ENCODE measurements at regions of chr13 and their contacts with region 1.

Region 1: GRCh38 chr13:98653463-98653985 is 76.6 kb upstream of the STK24 start:
- DNase-seq: peak; percentile 61 to 73 (median 64)
- H3K4me3 ChIP-seq: no peak overlapping the region
- H3K4me3 Mint-ChIP-seq: peak overlapping the region in 6 of 8 donors; percentile 42 to 84 (median 64)
- H3K27ac ChIP-seq: no peak overlapping the region
- H3K27ac Mint-ChIP-seq: peak overlapping the region in 3 of 7 donors; percentile 1 to 73 (median 68)
- H3K4me1 ChIP-seq: peaks cover 5% of the 10 kb centered on the region
- H3K4me1 Mint-ChIP-seq: peaks cover 0 to 7% (median 3%) of the 10 kb centered on the region in 4 donors
- H3K27me3 ChIP-seq: no peaks in the 10 kb centered on the region
- H3K27me3 Mint-ChIP-seq: peaks cover 0 to 3% of the 10 kb centered on the region in 2 donors

Region 2: DNA sequence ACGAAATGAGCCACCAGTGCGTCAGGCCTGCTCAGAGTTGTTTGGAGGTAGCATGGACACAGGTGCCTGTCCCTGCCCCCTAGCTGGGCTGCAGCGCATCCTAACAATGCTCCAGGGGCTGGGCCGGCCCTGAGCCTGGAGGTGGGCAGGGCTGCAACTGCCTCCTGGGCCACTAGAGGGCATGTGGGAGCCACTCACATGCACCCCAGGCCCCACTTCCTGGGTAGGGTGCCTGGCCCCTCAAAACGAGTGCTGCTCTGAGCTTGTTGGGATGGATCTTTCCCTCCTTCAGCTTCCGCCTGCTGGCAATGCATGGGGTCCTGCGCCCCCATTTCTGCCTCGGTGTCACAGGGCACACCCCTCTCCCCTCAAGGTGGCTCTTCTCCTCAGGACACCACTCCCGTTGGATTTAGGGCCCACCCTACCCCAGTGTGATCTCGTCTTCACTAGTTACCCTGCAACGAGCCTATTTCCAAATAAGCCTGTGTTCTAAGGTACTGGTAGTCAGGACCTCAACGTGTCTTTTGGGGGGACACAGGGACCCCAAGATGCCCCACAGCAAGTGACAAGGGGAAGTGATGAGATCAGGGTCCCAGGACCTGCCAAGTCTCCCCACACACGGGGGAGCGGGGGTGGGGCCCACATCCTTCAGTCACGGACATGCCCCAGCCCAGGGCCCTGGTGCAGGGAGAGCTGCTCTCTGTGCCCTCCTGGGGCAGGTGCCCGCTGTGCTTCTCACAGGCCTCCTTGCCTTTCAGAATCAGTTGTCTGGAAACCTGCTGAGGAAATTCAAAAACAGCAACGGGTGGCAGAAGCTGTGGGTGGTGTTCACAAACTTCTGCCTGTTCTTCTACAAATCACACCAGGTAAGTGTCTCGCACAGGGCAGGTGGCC is 207.9 kb before region 1 on chr13:
- CTCF ChIA-PET with region 1: interaction called, 345 read pairs
- POLR2A ChIA-PET with region 1: interaction called, 38 read pairs
- intact Hi-C with region 1: loop called (anchors 1 kb)
- DNase-seq: peak; percentile 73 to 79 (median 74)
- H3K4me3 ChIP-seq: no peak overlapping the region
- H3K4me3 Mint-ChIP-seq: peak overlapping the region in 7 of 8 donors; percentile 27 to 82 (median 57)
- H3K27ac ChIP-seq: peak overlapping the region; percentile 33
- H3K27ac Mint-ChIP-seq: peak overlapping the region; percentile 88 to 93 (median 90)
- H3K4me1 ChIP-seq: peaks cover 18% of the 10 kb centered on the region
- H3K4me1 Mint-ChIP-seq: peaks cover 7 to 37% (median 23%) of the 10 kb centered on the region in 4 donors
- H3K27me3 ChIP-seq: no peaks in the 10 kb centered on the region
- H3K27me3 Mint-ChIP-seq: no peaks in the 10 kb centered on the region

Region 3: GRCh38 chr13:98466634-98467236 is 186.8 kb before region 1 on chr13:
- CTCF ChIA-PET with region 1: interaction called, 48 read pairs
- POLR2A ChIA-PET with region 1: no interaction called
- intact Hi-C with region 1: no loop called
- DNase-seq: peak in 1 of 5 donors; percentile 24
- H3K4me3 ChIP-seq: no peak overlapping the region
- H3K4me3 Mint-ChIP-seq: no peak overlapping the region
- H3K27ac ChIP-seq: no peak overlapping the region
- H3K27ac Mint-ChIP-seq: peak overlapping the region in 6 of 7 donors; percentile 47 to 73 (median 58)
- H3K4me1 ChIP-seq: no peaks in the 10 kb centered on the region
- H3K4me1 Mint-ChIP-seq: peaks cover 16 to 35% (median 25%) of the 10 kb centered on the region in 4 donors
- H3K27me3 ChIP-seq: no peaks in the 10 kb centered on the region
- H3K27me3 Mint-ChIP-seq: no peaks in the 10 kb centered on the region

Region 4: DNA sequence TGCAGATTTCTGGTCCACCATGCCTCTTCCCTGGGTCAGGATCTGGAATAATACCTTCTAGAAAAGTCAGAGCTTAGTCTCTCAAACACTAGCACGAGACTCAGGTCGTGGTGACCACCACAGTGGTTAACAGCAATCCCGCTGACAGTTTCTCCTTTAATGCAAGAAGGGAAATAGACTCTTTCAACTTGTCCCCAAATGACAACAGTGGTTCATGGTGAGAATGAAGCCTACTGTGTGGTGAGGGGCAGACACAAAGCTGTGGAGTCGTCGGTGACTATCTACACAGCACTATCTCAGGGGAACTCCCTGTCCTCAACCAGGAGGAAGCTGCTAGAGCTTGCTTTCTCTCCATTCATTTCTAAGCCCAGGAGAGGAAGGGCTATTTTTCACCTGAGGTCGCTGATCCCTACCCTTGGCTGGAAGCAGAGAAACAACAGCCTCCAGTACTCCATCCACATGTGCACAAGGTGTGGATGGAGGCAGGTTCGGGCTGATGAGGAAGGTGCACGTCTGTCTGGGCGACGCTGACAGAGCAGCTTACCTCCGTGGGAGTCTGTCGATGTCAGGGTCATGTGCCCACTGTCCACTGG is 149.1 kb before region 1 on chr13:
- CTCF ChIA-PET with region 1: interaction called, 10 read pairs
- POLR2A ChIA-PET with region 1: no interaction called
- intact Hi-C with region 1: no loop called
- DNase-seq: peak in 2 of 5 donors; percentile 28 to 62
- H3K4me3 ChIP-seq: no peak overlapping the region
- H3K4me3 Mint-ChIP-seq: peak overlapping the region; percentile 19 to 78 (median 64)
- H3K27ac ChIP-seq: no peak overlapping the region
- H3K27ac Mint-ChIP-seq: peak overlapping the region; percentile 20 to 85 (median 78)
- H3K4me1 ChIP-seq: peaks cover 82% of the 10 kb centered on the region
- H3K4me1 Mint-ChIP-seq: peaks cover 71 to 100% (median 85%) of the 10 kb centered on the region in 4 donors
- H3K27me3 ChIP-seq: no peaks in the 10 kb centered on the region
- H3K27me3 Mint-ChIP-seq: no peaks in the 10 kb centered on the region

Region 5: GRCh38 chr13:98565726-98566565 is 87.6 kb before region 1 on chr13:
- CTCF ChIA-PET with region 1: interaction called, 17 read pairs
- POLR2A ChIA-PET with region 1: no interaction called
- intact Hi-C with region 1: no loop called
- DNase-seq: no peak
- H3K4me3 ChIP-seq: peak overlapping the region; percentile 4 to 39
- H3K4me3 Mint-ChIP-seq: peak overlapping the region; percentile 63 to 97 (median 86)
- H3K27ac ChIP-seq: peak overlapping the region; percentile 81
- H3K27ac Mint-ChIP-seq: peak overlapping the region; percentile 94 to 98 (median 97)
- H3K4me1 ChIP-seq: peaks cover 93% of the 10 kb centered on the region
- H3K4me1 Mint-ChIP-seq: peaks cover 72 to 98% (median 85%) of the 10 kb centered on the region in 4 donors
- H3K27me3 ChIP-seq: no peaks in the 10 kb centered on the region
- H3K27me3 Mint-ChIP-seq: no peaks in the 10 kb centered on the region

Region 6: DNA sequence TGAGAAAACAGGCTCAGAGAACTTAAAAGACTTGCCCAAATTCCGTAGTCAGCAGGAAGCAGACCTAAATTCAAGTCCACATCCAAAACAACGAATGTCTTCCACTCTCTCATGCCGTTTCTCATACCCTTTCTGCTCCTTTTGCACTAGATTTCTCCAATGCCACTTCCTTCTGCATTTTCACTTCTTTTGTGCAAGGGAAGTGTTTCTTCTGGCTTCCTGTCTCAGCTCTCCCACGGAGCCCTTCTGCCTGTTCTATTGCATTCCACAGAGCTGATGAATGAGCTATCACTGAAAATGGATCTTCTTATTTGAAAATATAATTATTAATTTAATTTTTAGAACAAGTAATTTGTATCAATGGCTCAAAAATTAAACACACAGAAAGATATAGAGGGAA is 20.6 kb before region 1 on chr13:
- CTCF ChIA-PET with region 1: interaction called, 13 read pairs
- POLR2A ChIA-PET with region 1: no interaction called
- intact Hi-C with region 1: no loop called
- DNase-seq: no peak
- H3K4me3 ChIP-seq: no peak overlapping the region
- H3K4me3 Mint-ChIP-seq: no peak overlapping the region
- H3K27ac ChIP-seq: no peak overlapping the region
- H3K27ac Mint-ChIP-seq: peak overlapping the region in 1 of 7 donors; percentile 54
- H3K4me1 ChIP-seq: no peaks in the 10 kb centered on the region
- H3K4me1 Mint-ChIP-seq: peaks cover 0 to 4% (median 0%) of the 10 kb centered on the region in 4 donors
- H3K27me3 ChIP-seq: no peaks in the 10 kb centered on the region
- H3K27me3 Mint-ChIP-seq: peaks cover 2 to 3% of the 10 kb centered on the region in 2 donors

Region 7: GRCh38 chr13:98672944-98673545 is 19.5 kb after region 1 on chr13:
- CTCF ChIA-PET with region 1: interaction called, 12 read pairs
- POLR2A ChIA-PET with region 1: interaction called, 4 read pairs
- intact Hi-C with region 1: no loop called
- DNase-seq: peak; percentile 36 to 53 (median 46)
- H3K4me3 ChIP-seq: no peak overlapping the region
- H3K4me3 Mint-ChIP-seq: no peak overlapping the region
- H3K27ac ChIP-seq: no peak overlapping the region
- H3K27ac Mint-ChIP-seq: no peak overlapping the region
- H3K4me1 ChIP-seq: peaks cover 7% of the 10 kb centered on the region
- H3K4me1 Mint-ChIP-seq: peaks cover 0 to 1% (median 0%) of the 10 kb centered on the region in 4 donors
- H3K27me3 ChIP-seq: no peaks in the 10 kb centered on the region
- H3K27me3 Mint-ChIP-seq: peaks cover 2 to 4% of the 10 kb centered on the region in 2 donors

Measured in CD4-positive, alpha-beta memory T cell (primary cell).